HCT116 (cell line): ENCODE measurements at regions of chr22 and their contacts with region 1.

Region 1: GRCh38 chr22:49317387-49317786 is 510.3 kb downstream of the BRD1 start:
- DNase-seq: no peak
- ATAC-seq: no peak
- H3K4me3 ChIP-seq: no peak overlapping the region
- H3K27ac ChIP-seq: no peak overlapping the region
- H3K4me1 ChIP-seq: no peaks in the 10 kb centered on the region
- H3K27me3 ChIP-seq: peaks cover 71% of the 10 kb centered on the region
- CTCF ChIP-seq: peak; percentile 16 to 53 (median 37); a peak in 5 of 6 replicates
- POLR2A ChIP-seq: no peak
- RAD21 ChIP-seq: peak; percentile 37

Region 2: GRCh38 chr22:49657275-49657975 is 340.0 kb after region 1 on chr22:
- CTCF ChIA-PET with region 1: no interaction called
- POLR2A ChIA-PET with region 1: no interaction called
- RAD21 ChIA-PET with region 1: no interaction called
- intact Hi-C with region 1: no loop called
- DNase-seq: peak; percentile 71
- ATAC-seq: peak; percentile 88
- H3K4me3 ChIP-seq: peak overlapping the region; percentile 78 to 79
- H3K27ac ChIP-seq: peak overlapping the region; percentile 82
- H3K4me1 ChIP-seq: peaks cover 3 to 12% of the 10 kb centered on the region in 2 experiments; a peak in 3 of 4 replicates
- H3K27me3 ChIP-seq: 0 out of 2 replicates have a peak, but pooled peaks cover under 1% of the 10 kb centered on the region
- CTCF ChIP-seq: no peak
- POLR2A ChIP-seq: peak; percentile 47
- RAD21 ChIP-seq: no peak

Region 3: GRCh38 chr22:49724893-49725474 is 407.6 kb after region 1 on chr22:
- CTCF ChIA-PET with region 1: no interaction called
- POLR2A ChIA-PET with region 1: no interaction called
- RAD21 ChIA-PET with region 1: no interaction called
- intact Hi-C with region 1: loop called (anchors 5 kb)
- DNase-seq: peak; percentile 10
- ATAC-seq: peak; percentile 99
- H3K4me3 ChIP-seq: no peak overlapping the region
- H3K27ac ChIP-seq: no peak overlapping the region
- H3K4me1 ChIP-seq: no peaks in the 10 kb centered on the region
- H3K27me3 ChIP-seq: peaks cover 59% of the 10 kb centered on the region
- CTCF ChIP-seq: peak; percentile 29 to 78 (median 66); a peak in 4 of 6 replicates
- POLR2A ChIP-seq: no peak
- RAD21 ChIP-seq: peak; percentile 80